Heart left ventricle (tissue), 16 donors: ENCODE measurements at regions of chr1 and their contacts with region 1.

Region 1: GRCh38 chr1:77825131-77825709 is 45.8 kb downstream of the MIGA1 start:
- DNase-seq: peak in 1 of 5 donors; percentile 18
- ATAC-seq: peak; percentile 59 to 79 (median 72)
- H3K4me3 ChIP-seq: no peak overlapping the region
- H3K27ac ChIP-seq: peak overlapping the region in 7 of 12 donors; percentile 10 to 55 (median 33)
- H3K4me1 ChIP-seq: peaks cover 0 to 43% (median 11%) of the 10 kb centered on the region in 12 donors
- H3K27me3 ChIP-seq: no peaks in the 10 kb centered on the region
- CTCF ChIP-seq: peak in 8 of 12 donors; percentile 17 to 56 (median 40)
- POLR2A ChIP-seq: no peak

Region 2: DNA sequence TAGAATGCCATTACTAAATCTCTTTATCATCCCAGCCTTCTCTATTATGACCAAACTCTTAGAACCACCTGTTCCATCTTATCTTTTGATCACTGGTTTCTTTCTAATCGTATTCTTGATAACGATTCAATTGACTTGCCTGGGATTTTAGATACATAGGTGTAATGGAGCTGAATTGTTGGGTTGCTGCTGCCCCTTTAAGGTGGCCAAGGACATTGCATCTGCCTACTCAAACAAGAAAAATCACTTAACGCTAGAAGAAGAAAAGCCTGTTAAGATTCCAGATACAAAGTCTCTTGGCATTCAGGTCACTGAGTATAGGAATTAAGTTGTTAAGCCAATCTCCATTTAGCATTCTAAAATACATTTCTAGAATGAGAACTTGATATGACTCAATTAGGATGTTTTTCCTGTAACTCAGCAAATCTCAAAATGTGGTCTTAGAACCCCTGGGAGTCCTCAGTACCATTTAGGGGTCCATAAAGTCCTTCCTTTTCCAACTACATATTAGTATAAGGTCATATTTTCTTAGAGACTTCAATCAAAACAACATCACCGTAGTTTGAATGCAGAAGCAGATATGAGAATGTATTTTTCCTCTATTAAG is 75.6 kb after region 1 on chr1:
- intact Hi-C with region 1: loop called in 3 of 10 experiments (anchors 5 kb)
- DNase-seq: peak in 1 of 5 donors; percentile 15
- ATAC-seq: peak in 3 of 4 donors; percentile 53 to 68 (median 65)
- H3K4me3 ChIP-seq: peak overlapping the region in 8 of 12 donors; percentile 13 to 41 (median 18)
- H3K27ac ChIP-seq: peak overlapping the region in 10 of 12 donors; percentile 7 to 74 (median 58)
- H3K4me1 ChIP-seq: peaks cover 0 to 35% (median under 1%) of the 10 kb centered on the region in 12 donors
- H3K27me3 ChIP-seq: no peaks in the 10 kb centered on the region
- CTCF ChIP-seq: peak; percentile 13 to 79 (median 57)
- POLR2A ChIP-seq: no peak